ENCODE measurements at regions of chr6 and their contacts with region 1.

Region 1: DNA sequence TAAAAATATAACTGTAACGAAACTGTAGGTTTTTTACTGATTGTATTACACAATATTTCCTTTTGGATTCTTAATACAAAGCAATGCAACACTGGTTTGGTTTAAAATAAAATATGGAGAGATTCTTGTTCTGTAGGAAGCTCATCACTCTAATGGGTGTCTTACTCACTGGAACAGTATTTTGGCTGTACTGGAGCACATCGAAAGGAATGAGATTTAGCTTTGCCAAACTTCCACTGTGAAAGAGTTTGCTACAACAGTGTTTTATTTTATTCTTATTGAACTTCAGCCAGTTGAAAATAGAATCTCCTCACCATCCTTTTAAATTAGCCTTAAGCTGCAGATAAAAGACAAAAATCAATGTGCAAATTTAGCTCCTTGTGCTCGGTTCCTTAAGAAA is 230.7 kb upstream of the QKI start:
- DNase-seq: no peak
- ATAC-seq: no peak
- H3K4me3 Mint-ChIP-seq: no peak overlapping the region
- H3K27ac Mint-ChIP-seq: no peak overlapping the region
- H3K4me1 Mint-ChIP-seq: no peaks in the 10 kb centered on the region
- H3K27me3 Mint-ChIP-seq: no peaks in the 10 kb centered on the region

Region 2: GRCh38 chr6:162960679-162961457 is 222.9 kb before region 1 on chr6:
- CTCF ChIA-PET with region 1: no interaction called
- POLR2A ChIA-PET with region 1: no interaction called
- DNase-seq: no peak
- ATAC-seq: no peak
- H3K4me3 Mint-ChIP-seq: no peak overlapping the region
- H3K27ac Mint-ChIP-seq: no peak overlapping the region
- H3K4me1 Mint-ChIP-seq: no peaks in the 10 kb centered on the region
- H3K27me3 Mint-ChIP-seq: no peaks in the 10 kb centered on the region

Region 3: DNA sequence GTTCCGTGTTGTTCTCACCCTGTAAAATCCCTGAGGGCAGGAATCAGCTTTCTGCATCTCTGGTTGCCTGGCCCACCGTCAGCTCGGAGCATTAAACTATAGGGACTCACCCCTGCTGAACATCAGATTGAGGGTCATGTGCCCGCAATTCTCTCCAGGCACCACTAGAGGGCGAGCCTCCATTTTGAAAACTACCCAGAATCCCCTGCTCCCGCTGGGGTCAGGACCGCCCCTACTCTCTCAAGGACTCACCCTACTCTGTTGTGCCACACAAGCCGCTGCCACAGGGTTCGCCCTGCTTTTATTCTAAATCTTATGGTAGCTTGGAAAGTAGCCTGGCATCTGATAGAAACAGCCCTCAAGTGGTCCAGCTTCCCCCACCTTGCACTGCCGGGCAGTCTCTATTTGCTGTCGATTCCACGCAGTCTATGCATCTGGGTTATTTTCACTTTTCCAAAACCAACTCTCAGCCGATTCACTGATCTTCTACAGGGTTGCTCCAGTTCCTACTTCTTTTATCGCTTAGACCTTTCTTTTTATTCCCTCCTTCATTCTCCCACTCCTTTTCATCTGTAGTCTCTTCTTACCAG is 13.4 kb before region 1 on chr6:
- CTCF ChIA-PET with region 1: interaction called, 11 read pairs
- POLR2A ChIA-PET with region 1: no interaction called
- DNase-seq: peak; percentile 34
- ATAC-seq: peak; percentile 30
- H3K4me3 Mint-ChIP-seq: no peak overlapping the region
- H3K27ac Mint-ChIP-seq: no peak overlapping the region
- H3K4me1 Mint-ChIP-seq: no peaks in the 10 kb centered on the region
- H3K27me3 Mint-ChIP-seq: no peaks in the 10 kb centered on the region

Measured in activated CD8-positive, alpha-beta T cell treated with anti-CD3 and anti-CD28 coated beads, Interleukin-2, amount 10 ng/mL, durations not matched to agents 7 days and 5 days (primary cell).